Heart left ventricle (tissue), 16 donors: ENCODE measurements at regions of chr4 and their contacts with region 1.

Region 1: GRCh38 chr4:174764105-174764729 is 64.8 kb downstream of the GLRA3 start:
- DNase-seq: no peak
- ATAC-seq: no peak
- H3K4me3 ChIP-seq: no peak overlapping the region
- H3K27ac ChIP-seq: no peak overlapping the region
- H3K4me1 ChIP-seq: no peaks in the 10 kb centered on the region
- H3K27me3 ChIP-seq: no peaks in the 10 kb centered on the region
- CTCF ChIP-seq: peak; percentile 20 to 71 (median 50)
- POLR2A ChIP-seq: no peak

Region 2: GRCh38 chr4:175253184-175253902 is 489.1 kb after region 1 on chr4:
- intact Hi-C with region 1: loop called in 1 of 10 experiments (anchors 10 kb)
- DNase-seq: no peak
- ATAC-seq: no peak
- H3K4me3 ChIP-seq: no peak overlapping the region
- H3K27ac ChIP-seq: no peak overlapping the region
- H3K4me1 ChIP-seq: no peaks in the 10 kb centered on the region
- H3K27me3 ChIP-seq: no peaks in the 10 kb centered on the region
- CTCF ChIP-seq: peak in 4 of 12 donors; percentile 18 to 31 (median 26)
- POLR2A ChIP-seq: no peak

Region 3: DNA sequence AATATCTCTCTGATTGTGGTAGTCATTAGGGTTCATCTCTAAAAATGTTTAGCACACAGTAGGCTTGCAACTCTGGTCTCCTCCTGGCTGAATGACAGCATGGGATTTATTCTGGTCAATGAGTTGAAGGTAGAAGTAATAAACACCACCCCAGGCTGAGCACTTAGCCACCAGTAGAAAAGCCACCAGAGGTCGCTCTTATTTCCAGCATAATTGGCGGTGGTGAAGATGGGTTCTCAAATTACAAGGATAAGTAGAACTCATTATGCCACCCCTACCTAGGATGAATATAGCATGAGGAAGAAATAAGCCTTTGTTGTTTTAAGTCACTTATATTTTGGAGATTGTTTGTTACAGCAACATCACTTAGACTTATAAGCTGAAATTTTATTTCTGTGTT is 745.1 kb after region 1 on chr4:
- intact Hi-C with region 1: no loop called
- DNase-seq: no peak
- ATAC-seq: no peak
- H3K4me3 ChIP-seq: no peak overlapping the region
- H3K27ac ChIP-seq: no peak overlapping the region
- H3K4me1 ChIP-seq: no peaks in the 10 kb centered on the region
- H3K27me3 ChIP-seq: no peaks in the 10 kb centered on the region
- CTCF ChIP-seq: no peak
- POLR2A ChIP-seq: no peak